Activated CD4-positive, alpha-beta T cell treated with anti-CD3 and anti-CD28 coated beads, Interleukin-2, amount 10 ng/mL, durations not matched to agents 7 days and 5 days (primary cell): ENCODE measurements at regions of chr3 and their contacts with region 1.

Region 1: DNA sequence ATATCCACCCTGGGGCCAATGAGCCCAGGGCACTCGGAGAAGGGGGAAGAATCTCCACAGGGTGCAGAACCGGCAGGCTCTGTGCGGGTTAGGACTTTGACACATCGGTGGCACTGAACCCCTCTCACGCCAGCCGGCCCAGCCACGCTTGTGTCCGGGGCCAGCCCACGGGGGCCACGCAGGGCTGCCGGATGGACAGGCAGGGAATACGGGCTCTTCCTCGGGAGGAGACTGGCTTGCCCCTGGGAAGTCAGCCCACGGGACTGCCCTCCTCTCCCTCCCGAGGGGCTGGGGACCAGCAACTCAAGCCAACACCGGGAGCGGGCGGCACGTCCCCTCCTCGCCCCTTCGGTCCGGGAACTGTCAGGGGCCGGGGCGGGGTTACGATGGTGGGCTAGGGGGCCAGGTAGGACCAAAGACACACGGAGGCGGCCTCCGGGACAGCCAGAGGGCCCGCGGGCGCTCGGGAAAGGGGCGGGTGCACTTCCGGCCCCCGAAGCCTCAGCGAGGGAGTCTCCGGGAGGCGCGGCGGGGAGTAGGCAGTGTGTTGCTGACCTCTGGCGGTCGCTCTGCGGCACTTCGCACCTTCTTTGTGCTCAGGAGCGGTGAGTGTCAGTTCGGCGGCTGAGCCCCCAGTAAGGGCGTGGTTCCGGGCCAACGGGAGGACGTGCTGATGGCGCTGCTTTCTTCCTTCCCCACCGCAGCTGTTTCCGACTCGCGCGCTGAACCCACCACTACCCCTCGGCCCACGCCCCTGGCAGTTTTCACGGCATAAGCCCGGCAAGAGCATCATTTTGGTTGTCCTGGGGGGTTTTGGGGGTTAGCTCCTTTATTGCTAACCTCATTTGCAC is 5.1 kb upstream of the CYP8B1 start:
- DNase-seq: peak; percentile 90
- H3K4me3 Mint-ChIP-seq: peak overlapping the region; percentile 63
- H3K27ac Mint-ChIP-seq: peak overlapping the region; percentile 89
- H3K4me1 Mint-ChIP-seq: peaks cover 14% of the 10 kb centered on the region
- H3K27me3 Mint-ChIP-seq: peaks cover 2% of the 10 kb centered on the region

Region 2: GRCh38 chr3:42214565-42215283 is 666.1 kb before region 1 on chr3:
- CTCF ChIA-PET with region 1: no interaction called
- POLR2A ChIA-PET with region 1: no interaction called
- DNase-seq: no peak
- H3K4me3 Mint-ChIP-seq: no peak overlapping the region
- H3K27ac Mint-ChIP-seq: peak overlapping the region; percentile 92
- H3K4me1 Mint-ChIP-seq: peaks cover 75% of the 10 kb centered on the region
- H3K27me3 Mint-ChIP-seq: no peaks in the 10 kb centered on the region

Region 3: GRCh38 chr3:42780892-42781700 is 99.7 kb before region 1 on chr3:
- CTCF ChIA-PET with region 1: interaction called, 12 read pairs
- POLR2A ChIA-PET with region 1: no interaction called
- DNase-seq: peak; percentile 66
- H3K4me3 Mint-ChIP-seq: no peak overlapping the region
- H3K27ac Mint-ChIP-seq: no peak overlapping the region
- H3K4me1 Mint-ChIP-seq: peaks cover 1% of the 10 kb centered on the region
- H3K27me3 Mint-ChIP-seq: no peaks in the 10 kb centered on the region